ENCODE measurements at regions of chr19 and their contacts with region 1.

Region 1: GRCh38 chr19:38402967-38403861 is at the start of gene FAM98C:
- DNase-seq: peak; percentile 97
- H3K4me3 ChIP-seq: peak within 1 kb of the TSS; percentile 66 to 77
- H3K27ac ChIP-seq: peak within 1 kb of the TSS; percentile 42 to 72
- H3K4me1 ChIP-seq: no peaks in the 10 kb centered on the region
- H3K27me3 ChIP-seq: no peaks in the 10 kb centered on the region
- CTCF ChIP-seq: peak; percentile 99 to 100 (median 99)
- POLR2A ChIP-seq: no peak
- total RNA-seq, gene FAM98C: 13.0 to 14.1 TPM

Region 2: DNA sequence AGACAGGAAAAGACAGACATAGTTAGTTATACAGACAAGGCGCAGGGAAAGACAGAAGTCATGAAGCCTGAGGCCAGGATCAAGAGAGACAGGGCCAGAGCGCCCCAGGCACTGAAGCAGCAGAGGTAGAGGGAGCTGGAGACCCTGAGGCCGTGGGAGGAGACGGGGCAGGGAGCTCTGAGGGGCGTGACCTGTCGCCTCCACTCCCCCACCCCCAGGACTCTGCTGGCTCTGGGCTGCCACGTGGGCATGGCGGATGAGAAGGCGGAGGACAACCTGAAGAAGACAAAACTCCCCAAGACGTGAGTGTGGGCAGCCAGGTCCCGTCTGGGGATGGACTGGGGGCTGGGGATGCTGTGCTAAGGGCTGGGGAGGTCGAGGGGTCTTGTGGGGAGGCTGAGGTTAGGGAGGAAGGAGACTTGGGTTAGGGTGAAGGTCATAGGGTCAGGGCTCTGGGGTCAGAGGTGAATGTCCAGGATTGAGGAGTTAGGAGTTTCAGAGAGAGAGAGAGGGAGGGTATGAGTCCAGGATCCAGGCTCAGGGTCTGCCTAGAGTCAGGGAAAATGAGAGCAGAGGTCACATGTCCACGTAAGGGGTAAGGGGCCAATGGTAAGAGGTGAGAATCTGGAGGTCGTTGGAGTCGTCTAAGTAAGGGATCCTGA is 61.3 kb after region 1 on chr19:
- intact Hi-C with region 1: no loop called
- DNase-seq: no peak
- H3K4me3 ChIP-seq: no peak overlapping the region
- H3K27ac ChIP-seq: no peak overlapping the region
- H3K4me1 ChIP-seq: no peaks in the 10 kb centered on the region
- H3K27me3 ChIP-seq: no peaks in the 10 kb centered on the region
- CTCF ChIP-seq: no peak
- POLR2A ChIP-seq: no peak

Region 3: DNA sequence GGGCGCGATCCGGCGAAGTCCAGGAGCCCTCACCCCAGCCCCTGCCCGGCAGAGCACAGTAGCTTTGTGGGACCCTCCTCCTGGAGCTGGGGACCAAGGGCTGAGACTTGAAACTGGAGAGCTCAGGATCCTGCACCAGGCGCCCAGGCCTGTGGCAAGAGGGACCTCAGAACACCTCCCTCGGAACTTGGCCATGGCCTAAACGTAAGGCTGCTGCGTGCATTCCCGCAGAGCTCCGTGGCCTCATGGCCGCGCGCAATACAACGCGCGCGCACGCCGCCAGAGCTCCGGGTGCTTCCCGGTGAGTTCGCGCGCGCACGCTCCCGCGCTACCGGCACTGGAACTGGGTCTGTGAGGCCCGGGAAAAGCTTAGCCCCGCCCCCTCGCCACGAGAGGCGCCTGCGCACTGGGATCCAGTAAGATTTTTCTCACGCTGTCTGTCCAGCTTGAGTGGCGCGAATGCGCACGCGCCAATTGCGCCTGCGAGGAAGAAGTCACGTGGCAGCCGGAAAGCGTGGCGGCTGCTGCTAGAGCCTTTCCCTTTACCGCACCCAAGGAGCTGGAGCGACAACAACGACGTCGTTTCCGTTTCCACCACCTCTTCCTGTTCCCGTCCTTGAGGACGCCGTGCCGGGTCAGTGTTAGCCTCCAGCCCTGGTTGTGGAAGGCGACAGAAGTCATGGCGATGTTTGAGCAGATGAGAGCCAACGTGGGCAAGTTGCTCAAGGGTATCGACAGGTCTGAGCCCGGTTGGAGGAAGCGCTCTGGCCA is 215.6 kb after region 1 on chr19 and contains the start of gene EIF3K:
- intact Hi-C with region 1: loop called (anchors 10 kb)
- DNase-seq: peak; percentile 99
- H3K4me3 ChIP-seq: peak within 1 kb of the TSS; percentile 83 to 94
- H3K27ac ChIP-seq: peak within 1 kb of the TSS; percentile 57 to 76
- H3K4me1 ChIP-seq: peaks cover 7% of the 10 kb centered on the region
- H3K27me3 ChIP-seq: no peaks in the 10 kb centered on the region
- CTCF ChIP-seq: peak in 1 of 3 experiments; percentile 3
- POLR2A ChIP-seq: no peak
- total RNA-seq, gene EIF3K: 195 to 235 TPM